A673 (cell line): ENCODE measurements at regions of chr2 and their contacts with region 1.

Region 1: DNA sequence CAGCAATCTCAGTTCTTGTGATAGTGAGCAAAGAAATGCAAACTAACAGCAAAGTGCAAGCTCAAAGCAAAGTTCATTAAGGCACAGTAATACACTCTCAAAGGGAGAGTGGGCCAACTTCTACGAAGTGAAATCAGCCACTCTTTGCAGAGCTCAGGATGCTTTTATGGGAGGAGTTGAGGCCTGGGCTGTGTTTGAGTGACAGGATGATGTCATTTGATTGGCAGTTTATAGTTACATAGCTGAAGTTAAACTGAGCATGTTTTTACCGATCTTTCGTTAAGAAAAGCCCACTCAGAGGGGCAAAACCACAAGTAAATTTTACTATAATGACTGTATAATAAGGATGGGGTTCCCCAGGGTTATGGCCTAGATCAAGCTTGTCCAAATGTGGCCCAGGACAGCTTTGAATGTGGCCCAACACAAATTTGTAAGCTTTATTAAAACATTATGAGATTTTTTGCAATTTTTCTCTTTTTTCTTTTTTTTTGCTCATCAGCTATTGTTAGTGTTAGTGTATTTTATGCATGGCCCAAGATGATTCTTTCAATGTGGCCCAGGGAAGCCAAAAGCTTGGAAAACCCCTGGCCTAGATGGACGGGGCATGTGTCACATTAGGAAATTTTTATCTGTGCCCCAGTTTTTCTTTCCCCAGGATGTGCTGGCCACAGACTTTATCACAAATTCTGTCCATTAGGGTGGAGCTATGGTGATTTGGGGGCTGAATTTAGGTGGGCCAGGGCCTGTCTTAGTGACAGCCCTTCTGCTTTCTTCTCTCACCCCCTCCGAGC is 8.3 kb upstream of the DNAH7 start:
- DNase-seq: no peak
- H3K4me3 ChIP-seq: no peak overlapping the region
- H3K27ac ChIP-seq: no peak overlapping the region
- H3K4me1 ChIP-seq: no peaks in the 10 kb centered on the region
- H3K27me3 ChIP-seq: no peaks in the 10 kb centered on the region
- CTCF ChIP-seq: no peak

Region 2: GRCh38 chr2:195612611-195613495 is 464.1 kb before region 1 on chr2:
- CTCF ChIA-PET with region 1: no interaction called
- POLR2A ChIA-PET with region 1: no interaction called
- intact Hi-C with region 1: no loop called
- DNase-seq: no peak
- H3K4me3 ChIP-seq: no peak overlapping the region
- H3K27ac ChIP-seq: no peak overlapping the region
- H3K4me1 ChIP-seq: no peaks in the 10 kb centered on the region
- H3K27me3 ChIP-seq: no peaks in the 10 kb centered on the region
- CTCF ChIP-seq: no peak

Region 3: GRCh38 chr2:196171248-196171871 is 94.4 kb after region 1 on chr2 and contains the start of gene STK17B:
- CTCF ChIA-PET with region 1: interaction called, 4 read pairs
- POLR2A ChIA-PET with region 1: no interaction called
- intact Hi-C with region 1: loop called (anchors 5 kb)
- DNase-seq: peak; percentile 96
- H3K4me3 ChIP-seq: peak within 1 kb of the TSS; percentile 99
- H3K27ac ChIP-seq: peak within 1 kb of the TSS; percentile 85
- H3K4me1 ChIP-seq: peaks cover 33% of the 10 kb centered on the region
- H3K27me3 ChIP-seq: no peaks in the 10 kb centered on the region
- CTCF ChIP-seq: 0 out of 2 replicates have a peak, but pooled peaks have one; percentile 25
- total RNA-seq, gene STK17B: 18.4 and 18.5 TPM in 2 replicates

Region 4: GRCh38 chr2:196200557-196200956 is 123.6 kb after region 1 on chr2:
- CTCF ChIA-PET with region 1: no interaction called
- POLR2A ChIA-PET with region 1: no interaction called
- intact Hi-C with region 1: no loop called
- DNase-seq: no peak
- H3K4me3 ChIP-seq: no peak overlapping the region
- H3K27ac ChIP-seq: no peak overlapping the region
- H3K4me1 ChIP-seq: peaks cover 2% of the 10 kb centered on the region
- H3K27me3 ChIP-seq: no peaks in the 10 kb centered on the region
- CTCF ChIP-seq: no peak

Region 5: DNA sequence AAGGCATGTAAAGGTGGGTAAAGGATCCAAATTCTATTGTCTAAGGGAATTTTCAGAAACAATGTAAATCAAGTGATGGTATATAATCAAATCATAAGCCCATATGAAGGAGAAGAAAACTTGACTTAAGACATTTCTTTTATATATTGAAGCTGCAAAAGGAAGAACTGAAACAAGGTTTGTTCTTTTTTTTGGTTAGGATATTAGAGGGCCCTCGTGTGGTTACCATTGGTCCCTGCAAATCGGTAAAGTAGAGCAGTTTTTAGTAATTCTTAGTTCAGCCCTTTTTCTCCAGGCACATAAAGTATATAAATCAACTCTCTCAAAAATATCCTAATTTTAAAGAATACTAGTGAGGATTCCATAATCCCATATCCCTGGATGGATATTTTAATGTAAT is 200.0 kb after region 1 on chr2:
- CTCF ChIA-PET with region 1: interaction called, 6 read pairs
- POLR2A ChIA-PET with region 1: no interaction called
- intact Hi-C with region 1: loop called (anchors 2 kb)
- DNase-seq: peak; percentile 59
- H3K4me3 ChIP-seq: no peak overlapping the region
- H3K27ac ChIP-seq: no peak overlapping the region
- H3K4me1 ChIP-seq: peaks cover 13% of the 10 kb centered on the region
- H3K27me3 ChIP-seq: no peaks in the 10 kb centered on the region
- CTCF ChIP-seq: peak; percentile 77

Region 6: GRCh38 chr2:196337208-196337953 is 260.4 kb after region 1 on chr2:
- CTCF ChIA-PET with region 1: interaction called, 14 read pairs
- POLR2A ChIA-PET with region 1: no interaction called
- intact Hi-C with region 1: loop called (anchors 1 kb)
- DNase-seq: peak; percentile 56
- H3K4me3 ChIP-seq: no peak overlapping the region
- H3K27ac ChIP-seq: no peak overlapping the region
- H3K4me1 ChIP-seq: peaks cover 2% of the 10 kb centered on the region
- H3K27me3 ChIP-seq: no peaks in the 10 kb centered on the region
- CTCF ChIP-seq: peak; percentile 58; the same call in 1 of the 2 replicates

Region 7: DNA sequence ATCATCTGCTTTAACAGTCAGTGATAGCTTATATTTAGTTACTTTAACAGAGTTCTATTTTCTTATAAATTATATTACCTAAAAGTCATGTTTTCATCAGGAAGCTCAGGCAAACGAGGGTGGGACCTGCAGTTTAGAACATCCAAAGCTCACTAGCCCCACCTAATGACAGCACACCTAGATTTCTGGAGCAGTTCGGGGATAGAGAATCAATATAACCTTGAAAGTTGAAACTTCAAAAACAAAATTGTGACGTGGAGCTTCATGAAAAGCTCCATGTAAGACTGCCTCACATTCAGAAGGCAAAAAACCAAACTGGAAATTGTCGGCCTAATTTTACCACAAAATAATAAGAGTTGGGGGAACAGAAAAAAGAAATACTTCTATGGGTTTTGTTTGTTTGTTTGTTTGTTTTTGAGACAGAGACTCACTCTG is 376.7 kb after region 1 on chr2:
- CTCF ChIA-PET with region 1: interaction called, 12 read pairs
- POLR2A ChIA-PET with region 1: no interaction called
- intact Hi-C with region 1: loop called (anchors 2 kb)
- DNase-seq: peak; percentile 57
- H3K4me3 ChIP-seq: no peak overlapping the region
- H3K27ac ChIP-seq: no peak overlapping the region
- H3K4me1 ChIP-seq: no peaks in the 10 kb centered on the region
- H3K27me3 ChIP-seq: no peaks in the 10 kb centered on the region
- CTCF ChIP-seq: peak; percentile 71

Region 8: DNA sequence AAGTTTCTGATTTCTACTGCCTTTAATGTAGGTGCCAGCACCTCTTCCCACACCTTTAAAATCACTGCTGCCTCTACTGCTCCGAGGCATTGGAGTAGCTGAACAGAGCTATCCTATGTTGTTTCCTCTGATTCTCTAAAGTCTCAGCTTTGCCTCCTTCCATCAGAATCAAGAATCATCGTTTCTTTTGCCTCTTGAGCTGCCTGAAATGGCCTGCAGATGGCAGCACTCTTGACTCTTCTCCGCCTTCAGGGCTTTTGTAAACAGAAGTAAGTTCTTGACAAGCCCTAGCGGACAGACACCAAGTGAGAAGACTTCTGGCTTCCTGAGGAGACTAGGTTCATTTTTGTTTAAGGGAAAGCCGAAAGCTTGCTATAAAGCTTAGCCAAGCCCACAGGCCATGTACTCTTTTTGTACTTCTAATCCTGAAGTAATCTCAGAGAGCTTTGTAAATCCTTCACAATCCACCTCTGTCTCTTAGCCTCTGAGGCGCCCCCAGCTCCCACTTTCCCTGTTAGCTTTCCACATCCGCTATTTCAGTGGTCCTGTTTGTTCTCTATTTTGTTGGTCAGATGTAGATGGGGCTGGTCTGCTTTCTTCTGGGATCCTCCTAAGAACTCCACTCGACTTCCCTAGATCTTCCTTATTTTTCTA is 674.1 kb after region 1 on chr2:
- CTCF ChIA-PET with region 1: no interaction called
- POLR2A ChIA-PET with region 1: no interaction called
- intact Hi-C with region 1: loop called (anchors 10 kb)
- DNase-seq: peak; percentile 87
- H3K4me3 ChIP-seq: no peak overlapping the region
- H3K27ac ChIP-seq: no peak overlapping the region
- H3K4me1 ChIP-seq: peaks cover 10% of the 10 kb centered on the region
- H3K27me3 ChIP-seq: no peaks in the 10 kb centered on the region
- CTCF ChIP-seq: peak; percentile 97